ENCODE measurements at regions of chr19 and their contacts with region 1.

Region 1: GRCh38 chr19:35693830-35694599 is 10.3 kb upstream of the ZBTB32 start:
- DNase-seq: peak; percentile 84 to 87 (median 87)
- ATAC-seq: peak; percentile 100
- H3K4me3 ChIP-seq: no peak overlapping the region
- H3K27ac ChIP-seq: no peak overlapping the region
- H3K4me1 ChIP-seq: no peaks in the 10 kb centered on the region
- H3K27me3 ChIP-seq: no peaks in the 10 kb centered on the region
- CTCF ChIP-seq: peak; percentile 95 to 99 (median 96)
- POLR2A ChIP-seq: no peak

Region 2: GRCh38 chr19:35736913-35737886 is 43.2 kb after region 1 on chr19:
- intact Hi-C with region 1: no loop called
- DNase-seq: no peak
- ATAC-seq: no peak
- H3K4me3 ChIP-seq: no peak overlapping the region
- H3K27ac ChIP-seq: no peak overlapping the region
- H3K4me1 ChIP-seq: peaks cover 0 to 16% (median 0%) of the 10 kb centered on the region in 4 donors
- H3K27me3 ChIP-seq: no peaks in the 10 kb centered on the region
- CTCF ChIP-seq: peak in 1 of 4 donors; percentile 12
- POLR2A ChIP-seq: no peak

Region 3: DNA sequence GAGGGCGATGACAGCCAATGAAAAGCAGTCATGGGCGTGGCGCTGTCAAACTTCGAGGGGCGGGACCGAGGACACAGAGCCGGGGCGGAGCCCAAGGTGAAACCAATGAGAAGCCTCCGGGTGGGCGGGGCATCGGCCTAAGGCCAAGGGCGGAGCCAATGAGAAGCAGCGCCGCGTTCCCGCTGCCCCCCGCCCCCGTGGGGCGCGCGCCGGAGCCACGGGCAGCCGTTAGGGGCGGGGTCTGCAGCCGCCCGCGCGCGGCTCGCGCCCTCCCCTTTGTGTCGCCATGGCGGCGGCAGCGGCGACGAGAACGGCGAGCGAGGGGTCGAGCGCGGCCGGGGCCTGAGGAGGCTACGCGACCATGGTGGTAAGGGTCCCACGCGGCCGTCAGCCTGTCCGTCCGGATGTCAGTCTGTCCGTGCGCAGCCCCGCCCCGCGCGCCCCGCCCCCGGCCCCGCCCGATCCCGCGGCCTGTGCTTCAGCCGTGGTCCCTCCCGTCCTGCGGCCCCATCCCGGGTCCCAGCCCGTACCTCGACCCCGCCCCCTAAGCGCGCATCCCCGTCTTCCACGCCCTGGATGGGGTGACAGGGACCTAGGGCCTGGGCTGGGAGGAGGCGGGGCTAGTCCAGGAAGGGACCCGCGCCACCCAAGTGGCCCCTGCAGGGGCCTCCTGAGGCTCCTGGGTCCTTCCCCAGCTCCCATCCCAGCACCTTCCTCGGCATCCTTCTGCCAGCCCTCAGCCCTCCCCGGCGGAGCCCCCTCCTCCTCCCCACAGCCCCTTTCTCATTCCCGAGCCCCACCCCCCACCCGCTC is 81.5 kb after region 1 on chr19 and contains the start of gene ARHGAP33:
- intact Hi-C with region 1: no loop called
- DNase-seq: peak; percentile 98 to 99 (median 99)
- ATAC-seq: peak; percentile 99 to 100 (median 99)
- H3K4me3 ChIP-seq: peak within 1 kb of the TSS; percentile 73 to 81 (median 78)
- H3K27ac ChIP-seq: no peak within 1 kb of the TSS
- H3K4me1 ChIP-seq: no peaks in the 10 kb centered on the region
- H3K27me3 ChIP-seq: no peaks in the 10 kb centered on the region
- CTCF ChIP-seq: no peak
- POLR2A ChIP-seq: no peak
- total RNA-seq, gene ARHGAP33: 0.37 to 5.2 (median 3.1) TPM

Region 4: DNA sequence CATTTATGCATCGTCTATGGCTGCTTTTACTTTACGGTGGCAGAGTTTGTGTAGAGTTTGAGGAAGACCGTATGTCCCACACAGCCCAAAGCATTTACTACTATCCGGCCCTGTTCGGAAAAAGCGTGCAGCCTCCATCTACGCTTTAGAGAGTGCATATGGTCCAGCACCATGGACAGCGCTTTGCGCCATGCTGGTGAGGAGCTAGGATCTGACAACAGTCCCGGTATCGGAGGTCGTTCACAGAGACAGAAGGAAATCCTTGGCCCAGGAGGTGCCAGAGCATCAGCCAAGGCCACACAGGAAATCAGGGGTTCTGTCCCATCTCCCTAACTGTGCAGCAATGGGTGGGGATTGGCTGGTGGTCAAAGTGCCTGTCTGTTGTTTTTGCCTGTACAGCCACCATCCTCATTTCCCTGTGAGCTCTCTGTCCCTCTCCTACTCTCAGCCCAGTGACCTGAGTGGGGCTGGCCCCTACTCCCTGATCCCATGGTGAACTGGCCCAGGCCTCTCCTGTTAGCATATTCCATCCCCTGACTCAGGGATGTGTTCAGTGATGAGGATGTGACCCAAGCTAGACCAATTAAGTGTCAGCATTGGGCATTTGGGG is 134.8 kb after region 1 on chr19:
- intact Hi-C with region 1: loop called (anchors 10 kb)
- DNase-seq: peak in 2 of 3 donors; percentile 67
- ATAC-seq: peak; percentile 54 to 80 (median 71)
- H3K4me3 ChIP-seq: no peak overlapping the region
- H3K27ac ChIP-seq: no peak overlapping the region
- H3K4me1 ChIP-seq: no peaks in the 10 kb centered on the region
- H3K27me3 ChIP-seq: no peaks in the 10 kb centered on the region
- CTCF ChIP-seq: no peak
- POLR2A ChIP-seq: no peak

Region 5: DNA sequence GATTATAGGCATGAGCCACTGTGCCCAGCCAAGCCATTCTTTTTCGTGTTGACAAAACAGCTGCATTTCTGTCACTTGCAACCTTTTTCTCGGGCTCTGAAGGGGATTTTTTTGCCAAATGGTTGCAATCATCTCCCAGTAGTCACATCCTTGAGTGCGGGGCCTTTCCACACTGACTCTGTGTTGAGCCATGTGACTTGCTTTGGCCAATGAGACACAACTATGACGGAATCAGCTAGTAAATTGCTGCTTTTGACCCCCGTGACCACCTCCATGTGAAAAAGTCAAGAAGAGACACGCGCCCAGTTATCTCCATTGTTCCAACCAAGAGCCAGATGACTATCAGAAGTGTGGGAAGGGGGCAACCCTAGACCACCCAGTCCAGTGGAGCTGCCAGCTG is 140.0 kb after region 1 on chr19:
- intact Hi-C with region 1: loop called (anchors 10 kb)
- DNase-seq: no peak
- ATAC-seq: no peak
- H3K4me3 ChIP-seq: no peak overlapping the region
- H3K27ac ChIP-seq: no peak overlapping the region
- H3K4me1 ChIP-seq: no peaks in the 10 kb centered on the region
- H3K27me3 ChIP-seq: no peaks in the 10 kb centered on the region
- CTCF ChIP-seq: no peak
- POLR2A ChIP-seq: no peak